GM10248 (cell line): ENCODE measurements at regions of chr12 and their contacts with region 1.

Region 1: DNA sequence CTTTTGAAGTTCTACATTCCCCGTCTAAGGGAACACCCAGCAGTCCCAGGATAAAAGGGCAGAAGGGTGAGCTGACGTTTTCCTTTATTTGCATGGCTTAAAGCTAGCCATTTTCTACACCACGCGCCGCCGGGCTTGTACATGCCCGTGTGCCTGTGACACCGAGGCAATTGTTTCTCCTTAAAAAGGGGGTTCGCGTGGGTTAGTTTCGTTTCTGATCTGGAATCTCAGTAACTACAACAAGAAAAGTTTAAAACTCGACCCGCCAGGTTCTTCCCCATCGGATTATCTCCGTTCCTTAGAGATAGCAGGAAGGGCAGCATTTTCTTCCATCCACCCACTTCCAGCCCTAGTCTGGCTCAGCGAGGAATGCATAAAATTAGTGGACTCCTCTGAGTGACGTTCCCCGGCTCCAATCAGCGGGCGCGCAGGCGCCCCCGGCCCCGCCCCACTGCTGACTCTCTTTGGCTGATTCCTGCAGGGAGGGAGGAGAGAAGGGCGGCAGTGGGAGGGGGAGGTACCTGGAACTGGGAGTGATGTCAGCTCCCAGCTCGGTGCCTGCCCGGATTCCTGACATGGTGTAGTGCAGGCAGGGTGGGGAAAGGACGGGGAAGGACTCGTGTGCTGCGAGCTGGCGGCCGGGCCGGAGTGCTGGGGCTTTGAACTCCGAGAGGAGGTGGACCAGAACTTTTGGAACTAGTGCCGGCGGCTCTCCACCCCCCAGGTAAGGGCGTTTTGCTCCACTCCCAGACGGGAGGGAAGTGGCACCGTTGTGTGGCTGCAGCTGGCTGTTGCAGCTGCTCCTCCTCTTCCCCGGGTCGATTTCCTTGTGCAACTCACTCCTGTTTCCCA is at the start of gene PPFIBP1:
- DNase-seq: peak; percentile 97
- CTCF ChIP-seq: no peak

Region 2: DNA sequence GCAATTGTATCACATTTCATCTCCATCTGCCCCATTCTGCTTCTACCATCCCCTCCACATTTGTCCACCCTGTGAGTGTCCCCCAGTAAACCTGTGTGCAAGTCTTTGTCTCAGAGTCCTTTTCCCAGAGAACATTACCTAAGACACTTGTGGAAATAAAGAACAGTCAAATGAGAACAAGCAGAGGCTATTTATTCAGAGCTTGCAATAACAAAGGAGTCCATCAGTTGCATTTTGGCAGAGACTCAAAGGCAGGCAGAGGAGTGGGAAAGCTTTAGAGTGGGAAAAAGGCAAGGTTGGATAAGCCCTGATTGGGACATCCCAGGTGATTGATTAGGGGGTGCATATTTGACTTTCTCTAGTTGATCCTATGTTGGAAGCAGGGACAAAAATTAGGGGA is 18.1 kb before region 1 on chr12:
- CTCF ChIA-PET with region 1: no interaction called
- POLR2A ChIA-PET with region 1: interaction called, 11 read pairs
- DNase-seq: no peak
- CTCF ChIP-seq: no peak

Region 3: DNA sequence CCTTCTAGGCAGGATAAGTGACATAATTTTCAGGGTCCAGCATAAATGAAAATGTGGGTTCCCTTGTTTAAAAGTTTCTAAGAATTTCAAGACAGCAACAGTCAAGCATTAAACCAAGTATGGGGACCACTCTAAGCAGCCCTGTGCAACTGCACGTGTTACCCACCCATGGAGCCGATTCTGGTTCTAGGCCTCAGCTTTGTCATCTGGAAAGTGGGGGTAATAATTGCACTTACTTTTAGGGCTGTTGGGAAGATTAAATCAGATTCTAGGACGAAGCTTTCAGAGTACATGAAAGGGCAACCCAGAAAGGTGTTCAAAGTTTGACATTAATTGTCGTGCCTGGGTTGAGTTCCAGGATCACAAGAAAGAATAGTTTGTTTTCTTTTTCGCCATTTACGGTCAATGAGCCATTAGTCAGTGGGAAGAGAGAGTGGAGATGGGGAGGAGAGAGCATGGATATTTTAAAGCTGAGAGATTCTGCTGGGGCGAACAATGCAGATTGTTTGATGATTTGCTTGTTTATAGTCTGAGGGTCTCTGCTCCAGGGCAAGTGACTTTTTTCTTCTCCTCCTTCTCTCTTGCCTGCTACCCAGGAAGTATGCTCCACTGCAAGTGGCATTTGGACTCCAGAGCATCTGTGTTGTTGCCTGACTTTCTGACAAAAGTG is 10.6 kb before region 1 on chr12:
- CTCF ChIA-PET with region 1: interaction called, 13 read pairs
- POLR2A ChIA-PET with region 1: no interaction called
- DNase-seq: no peak
- CTCF ChIP-seq: no peak

Region 4: DNA sequence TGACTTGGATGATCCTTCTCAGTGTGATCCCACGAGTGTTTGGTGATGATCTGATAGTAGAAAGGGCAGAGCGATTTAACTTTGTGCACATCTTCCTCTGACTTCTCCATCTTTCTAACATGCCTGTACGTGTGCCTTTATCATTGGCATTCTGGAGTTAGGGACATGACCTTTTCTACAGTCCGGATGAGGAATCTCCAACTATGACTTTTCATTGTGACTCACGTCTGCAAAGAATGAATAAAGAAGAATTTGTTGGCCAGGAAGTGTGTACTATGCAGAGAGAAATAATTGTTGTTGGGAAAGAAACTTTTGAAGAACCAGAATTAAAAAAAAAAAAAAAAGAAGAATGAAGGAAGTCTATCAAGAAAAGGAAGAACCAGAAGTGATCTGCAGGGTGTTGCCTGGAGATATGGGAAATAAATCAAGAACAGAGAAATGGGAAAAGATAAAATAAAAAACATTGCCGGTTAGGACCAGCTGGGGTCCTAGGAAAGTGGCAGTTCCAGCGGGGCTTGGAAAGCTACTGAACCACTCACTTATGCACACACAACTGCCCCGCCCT is 25.4 kb after region 1 on chr12:
- CTCF ChIA-PET with region 1: no interaction called
- POLR2A ChIA-PET with region 1: no interaction called
- DNase-seq: no peak
- CTCF ChIP-seq: no peak

Region 5: GRCh38 chr12:27644158-27644845 is 120.4 kb after region 1 on chr12:
- CTCF ChIA-PET with region 1: no interaction called
- POLR2A ChIA-PET with region 1: no interaction called
- DNase-seq: no peak
- CTCF ChIP-seq: no peak